AG04449 (cell line): ENCODE measurements at regions of chr16 and their contacts with region 1.

Region 1: GRCh38 chr16:10509534-10510025 is 70.8 kb downstream of the EMP2 start:
- DNase-seq: peak; percentile 42
- H3K4me3 ChIP-seq: no peak overlapping the region
- CTCF ChIP-seq: peak; percentile 70

Region 2: GRCh38 chr16:9134739-9135138 is 1374.8 kb before region 1 on chr16:
- CTCF ChIA-PET with region 1: interaction called, 15 read pairs
- POLR2A ChIA-PET with region 1: no interaction called
- DNase-seq: no peak
- H3K4me3 ChIP-seq: no peak overlapping the region
- CTCF ChIP-seq: peak; percentile 74

Region 3: GRCh38 chr16:10130538-10130937 is 379.0 kb before region 1 on chr16:
- CTCF ChIA-PET with region 1: no interaction called
- POLR2A ChIA-PET with region 1: no interaction called
- DNase-seq: no peak
- H3K4me3 ChIP-seq: no peak overlapping the region
- CTCF ChIP-seq: no peak

Region 4: GRCh38 chr16:10256784-10257641 is 252.6 kb before region 1 on chr16:
- CTCF ChIA-PET with region 1: interaction called, 62 read pairs
- POLR2A ChIA-PET with region 1: no interaction called
- DNase-seq: no peak
- H3K4me3 ChIP-seq: no peak overlapping the region
- CTCF ChIP-seq: peak; percentile 91

Region 5: DNA sequence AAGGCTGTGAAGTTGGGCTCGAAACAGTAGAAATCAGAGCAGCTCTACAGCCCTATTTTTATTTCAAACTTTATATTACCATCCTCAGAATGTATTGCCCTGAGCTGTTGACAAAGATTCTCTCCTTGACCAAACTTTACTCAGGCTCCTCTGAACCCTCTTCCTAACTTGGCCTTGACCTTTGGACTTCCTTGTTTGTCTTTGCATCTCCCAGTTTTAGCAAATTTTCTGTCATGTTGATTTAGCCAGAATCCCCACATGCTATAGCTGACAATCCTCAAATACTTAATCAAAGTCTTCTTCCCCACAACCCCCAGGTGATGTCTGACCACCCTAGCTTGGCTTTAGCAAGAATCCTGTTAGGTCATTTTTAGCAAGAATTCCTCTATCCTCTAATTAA is 239.9 kb before region 1 on chr16:
- CTCF ChIA-PET with region 1: no interaction called
- POLR2A ChIA-PET with region 1: no interaction called
- DNase-seq: no peak
- H3K4me3 ChIP-seq: no peak overlapping the region
- CTCF ChIP-seq: no peak

Region 6: GRCh38 chr16:10521681-10522274 is 12.2 kb after region 1 on chr16:
- CTCF ChIA-PET with region 1: interaction called, 15 read pairs
- POLR2A ChIA-PET with region 1: no interaction called
- DNase-seq: no peak
- H3K4me3 ChIP-seq: no peak overlapping the region
- CTCF ChIP-seq: peak; percentile 61

Region 7: DNA sequence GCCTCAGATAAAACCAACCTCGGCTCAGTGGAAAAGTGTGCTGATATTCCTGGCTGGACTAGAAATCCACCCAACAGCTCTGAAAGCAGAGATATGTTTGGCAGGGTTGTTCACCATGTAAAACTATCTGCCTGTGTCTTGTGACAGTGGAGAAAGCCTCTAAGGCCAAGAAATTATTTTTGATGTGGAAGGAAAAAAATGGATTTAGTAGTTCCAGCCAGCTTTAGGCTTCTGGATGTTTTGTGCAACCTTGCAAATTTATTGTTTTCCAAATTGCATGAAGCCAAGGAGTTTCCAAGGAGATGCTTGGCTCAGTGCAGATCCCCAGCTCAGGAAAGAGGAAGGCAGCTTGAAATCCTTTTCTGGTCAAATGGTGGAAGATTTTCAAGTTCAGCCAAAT is 153.6 kb after region 1 on chr16:
- CTCF ChIA-PET with region 1: no interaction called
- POLR2A ChIA-PET with region 1: no interaction called
- DNase-seq: no peak
- H3K4me3 ChIP-seq: no peak overlapping the region
- CTCF ChIP-seq: no peak

Region 8: DNA sequence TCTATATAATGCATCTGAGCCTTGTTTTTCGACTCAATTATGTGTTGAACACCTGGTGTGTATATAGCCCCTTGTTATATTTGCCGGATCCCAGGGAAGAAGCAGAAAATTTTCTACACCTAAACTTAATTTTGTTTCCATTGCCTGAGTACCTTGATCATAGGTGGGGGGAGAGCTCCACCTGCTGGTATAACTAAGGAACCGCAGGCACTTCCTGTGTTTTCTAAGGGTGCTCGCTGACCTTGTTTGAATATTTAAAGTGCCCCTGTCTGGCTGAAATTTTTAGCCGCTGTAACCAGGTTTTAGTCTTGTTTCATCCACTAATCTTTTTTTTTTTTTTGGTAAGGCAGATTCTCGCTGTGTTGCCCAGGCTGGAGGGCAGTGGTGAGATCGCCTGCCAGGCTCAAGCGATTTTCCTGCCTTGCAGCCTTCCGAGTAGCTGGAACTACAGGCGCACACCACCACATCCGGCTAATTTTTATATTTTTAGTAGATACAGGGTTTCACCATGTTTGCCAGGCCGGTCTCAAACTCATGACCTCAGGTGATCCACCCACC is 227.6 kb after region 1 on chr16:
- CTCF ChIA-PET with region 1: interaction called, 242 read pairs
- POLR2A ChIA-PET with region 1: no interaction called
- DNase-seq: no peak
- H3K4me3 ChIP-seq: no peak overlapping the region
- CTCF ChIP-seq: peak; percentile 75

Region 9: GRCh38 chr16:10918294-10919002 is 408.9 kb after region 1 on chr16:
- CTCF ChIA-PET with region 1: interaction called, 27 read pairs
- POLR2A ChIA-PET with region 1: no interaction called
- DNase-seq: peak; percentile 59
- H3K4me3 ChIP-seq: no peak overlapping the region
- CTCF ChIP-seq: peak; percentile 95